GM10248 (cell line): ENCODE measurements at regions of chr19 and their contacts with region 1.

Region 1: GRCh38 chr19:2475702-2476450 is at the start of gene GADD45B:
- DNase-seq: peak; percentile 98
- CTCF ChIP-seq: no peak

Region 2: DNA sequence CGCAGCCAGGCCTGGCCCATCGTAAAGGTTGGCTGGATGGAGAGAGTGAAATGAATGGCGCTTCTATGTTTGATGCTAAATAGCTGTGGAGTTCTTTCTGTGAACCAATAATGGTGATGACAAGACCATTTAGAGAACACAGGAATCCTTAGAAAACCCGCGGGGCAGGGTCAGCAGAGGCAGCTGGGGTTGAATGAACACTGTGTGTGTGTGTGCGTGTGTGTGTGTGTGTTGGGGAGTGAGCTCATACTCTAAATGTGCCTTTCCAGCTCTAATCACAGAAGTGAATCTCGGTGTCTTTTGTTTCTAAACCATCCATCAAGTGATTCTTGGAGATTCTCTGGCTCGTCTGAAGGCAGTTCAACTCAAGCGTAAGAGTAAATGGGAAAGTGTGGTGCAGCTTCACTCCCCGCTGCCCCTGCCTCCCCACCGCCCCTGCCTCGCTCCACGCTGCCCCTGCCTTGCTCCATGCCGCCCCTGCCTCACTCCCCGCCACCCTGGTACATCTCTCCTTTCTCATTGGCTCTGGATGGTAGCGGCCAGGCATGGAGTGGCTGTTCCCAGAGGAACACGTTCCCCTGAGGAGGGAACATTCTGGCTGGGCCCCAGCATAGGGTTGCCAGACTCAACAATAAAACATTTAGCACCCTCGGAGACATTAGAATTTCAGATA is 94.6 kb before region 1 on chr19:
- CTCF ChIA-PET with region 1: no interaction called
- POLR2A ChIA-PET with region 1: no interaction called
- DNase-seq: no peak
- CTCF ChIP-seq: no peak

Region 3: GRCh38 chr19:2455851-2456570 is 19.9 kb before region 1 on chr19:
- CTCF ChIA-PET with region 1: interaction called, 6 read pairs
- POLR2A ChIA-PET with region 1: interaction called, 45 read pairs
- DNase-seq: peak; percentile 86
- CTCF ChIP-seq: no peak

Region 4: GRCh38 chr19:2543463-2544442 is 67.9 kb after region 1 on chr19:
- CTCF ChIA-PET with region 1: interaction called, 4 read pairs
- POLR2A ChIA-PET with region 1: interaction called, 25 read pairs
- DNase-seq: peak; percentile 76
- CTCF ChIP-seq: no peak

Region 5: GRCh38 chr19:2588081-2588777 is 112.4 kb after region 1 on chr19:
- CTCF ChIA-PET with region 1: no interaction called
- POLR2A ChIA-PET with region 1: interaction called, 165 read pairs
- DNase-seq: no peak
- CTCF ChIP-seq: no peak

Region 6: GRCh38 chr19:2618611-2619010 is 142.7 kb after region 1 on chr19:
- CTCF ChIA-PET with region 1: interaction called, 126 read pairs
- POLR2A ChIA-PET with region 1: interaction called, 208 read pairs
- DNase-seq: no peak
- CTCF ChIP-seq: no peak

Region 7: GRCh38 chr19:2782936-2783780 is 307.3 kb after region 1 on chr19 and contains the start of gene SGTA:
- CTCF ChIA-PET with region 1: no interaction called
- POLR2A ChIA-PET with region 1: interaction called, 10 read pairs
- DNase-seq: peak; percentile 98
- CTCF ChIP-seq: peak; percentile 33